Gastrocnemius medialis (tissue), 4 donors: ENCODE measurements at regions of chr21 and their contacts with region 1.

Region 1: DNA sequence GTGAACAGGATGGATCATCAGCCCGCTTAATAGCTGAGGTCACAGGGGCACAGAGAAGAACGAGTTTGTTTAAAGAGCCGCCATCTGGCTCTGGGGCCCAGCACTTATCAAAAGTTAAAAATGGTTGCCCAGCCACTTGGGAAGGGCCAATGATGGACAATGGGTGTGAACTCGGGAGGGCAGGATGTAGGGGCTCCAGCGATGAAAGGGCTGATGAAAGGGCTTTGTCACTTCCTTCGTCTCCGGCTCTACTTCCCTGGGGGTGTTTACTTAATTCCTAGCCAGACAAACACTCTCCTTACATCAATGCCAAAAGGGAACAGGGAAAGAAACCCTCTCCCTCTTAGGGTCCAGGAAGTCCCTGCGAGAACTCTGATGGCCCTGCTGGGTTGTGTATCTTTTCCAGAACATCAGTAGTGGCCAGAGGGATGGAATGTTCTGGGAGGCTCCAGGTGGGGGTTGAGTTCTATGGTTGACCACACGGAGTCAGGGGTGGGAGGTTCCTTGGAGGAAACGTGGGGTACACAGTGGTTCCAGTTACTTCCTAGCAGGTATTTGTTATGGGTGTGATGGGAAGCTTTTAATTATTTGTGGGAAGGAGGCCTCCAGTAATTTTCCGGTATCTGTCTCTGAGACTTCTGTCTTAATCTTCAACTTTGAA is 9.0 kb upstream of the ABCG1 start:
- DNase-seq: peak in 1 of 2 donors; percentile 5
- ATAC-seq: no peak
- H3K4me3 ChIP-seq: no peak overlapping the region
- H3K27ac ChIP-seq: no peak overlapping the region
- H3K4me1 ChIP-seq: no peaks in the 10 kb centered on the region
- H3K27me3 ChIP-seq: no peaks in the 10 kb centered on the region
- CTCF ChIP-seq: no peak
- POLR2A ChIP-seq: no peak

Region 2: DNA sequence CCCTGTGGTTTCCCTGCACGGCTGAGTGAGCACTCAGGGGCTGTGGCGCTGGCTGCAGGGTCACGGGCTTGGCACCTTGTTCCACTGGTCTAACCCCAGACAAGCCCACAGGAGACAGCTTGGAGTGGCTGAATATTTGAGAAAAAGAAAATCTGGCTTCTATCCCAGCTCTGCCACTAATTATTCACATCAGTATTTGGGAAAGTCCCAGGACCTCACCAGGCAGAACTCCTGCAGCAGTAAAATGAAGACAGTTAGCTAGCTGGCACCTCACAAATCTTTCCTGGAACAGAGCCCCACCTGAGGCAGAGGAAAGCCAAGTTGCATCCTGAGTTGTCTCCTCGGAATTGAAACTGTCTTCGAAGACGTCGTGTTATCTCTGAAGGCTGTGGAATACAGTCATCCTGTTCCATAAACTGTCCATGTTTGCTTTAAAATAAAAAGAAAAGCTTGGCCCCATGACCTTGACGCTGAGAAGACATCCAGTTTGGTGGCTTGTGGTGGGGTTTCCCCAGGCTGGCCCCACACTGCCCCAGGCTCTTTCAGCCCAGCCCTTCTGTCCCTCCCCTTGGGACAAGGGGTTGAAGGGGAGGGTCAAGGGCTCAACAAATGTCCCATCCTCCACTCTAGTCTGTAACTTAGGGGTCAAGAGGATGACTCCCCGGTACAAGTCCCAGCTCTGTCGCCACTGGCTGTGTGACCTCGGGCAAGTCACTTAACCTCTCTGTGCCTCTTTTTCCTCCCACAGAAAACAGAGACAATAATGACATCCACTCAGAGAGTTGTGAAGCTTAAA is 608.2 kb before region 1 on chr21:
- in situ Hi-C with region 1: no loop called
- intact Hi-C with region 1: no loop called
- DNase-seq: no peak
- ATAC-seq: no peak
- H3K4me3 ChIP-seq: no peak overlapping the region
- H3K27ac ChIP-seq: no peak overlapping the region
- H3K4me1 ChIP-seq: no peaks in the 10 kb centered on the region
- H3K27me3 ChIP-seq: peaks cover 0 to 8% (median 0%) of the 10 kb centered on the region in 3 donors
- CTCF ChIP-seq: no peak
- POLR2A ChIP-seq: no peak

Region 3: GRCh38 chr21:42156690-42157577 is 53.0 kb before region 1 on chr21:
- in situ Hi-C with region 1: no loop called
- intact Hi-C with region 1: no loop called
- DNase-seq: no peak
- ATAC-seq: peak in 1 of 2 donors; percentile 18
- H3K4me3 ChIP-seq: no peak overlapping the region
- H3K27ac ChIP-seq: no peak overlapping the region
- H3K4me1 ChIP-seq: peaks cover 0 to 5% of the 10 kb centered on the region in 2 donors
- H3K27me3 ChIP-seq: no peaks in the 10 kb centered on the region
- CTCF ChIP-seq: no peak
- POLR2A ChIP-seq: no peak

Region 4: DNA sequence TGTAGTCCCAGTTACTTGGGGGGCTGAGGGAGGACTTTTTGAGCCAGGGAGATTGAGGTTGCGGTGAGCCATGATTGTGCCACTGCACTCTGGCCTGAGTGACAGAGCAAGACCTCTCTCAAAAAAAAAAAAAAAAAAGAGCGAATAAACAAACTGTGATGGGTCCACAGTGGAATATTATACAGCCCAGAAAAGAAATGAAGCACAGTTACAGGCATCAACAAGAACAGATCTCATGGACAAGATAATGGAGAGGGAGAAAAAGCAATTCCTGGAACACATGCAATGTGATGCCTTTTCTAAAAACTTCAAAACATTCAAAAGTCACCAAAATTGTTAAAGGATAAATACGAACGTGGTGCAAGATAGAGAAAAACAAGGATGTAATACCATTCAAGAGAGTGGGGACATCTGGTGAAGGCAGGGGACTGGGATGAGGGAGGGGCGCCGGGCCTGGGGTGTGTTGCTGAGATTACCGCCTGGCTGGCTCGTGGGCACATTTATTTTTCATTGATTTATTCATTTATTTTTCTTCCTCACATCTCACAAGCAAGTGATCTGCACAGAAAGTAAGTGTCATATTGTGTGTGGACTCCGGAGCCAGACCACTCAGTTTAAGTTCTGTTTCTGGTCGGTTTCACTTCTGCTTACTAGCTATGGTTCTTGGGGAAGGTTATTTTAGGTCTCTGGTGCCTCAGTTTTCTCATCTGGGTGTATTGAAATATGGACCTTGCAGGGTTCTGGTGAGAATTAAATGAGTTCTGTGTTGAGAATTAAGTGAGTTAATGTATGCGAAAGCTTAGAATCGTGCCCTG is 39.0 kb after region 1 on chr21:
- in situ Hi-C with region 1: loop called in 1 of 4 experiments (anchors 10 kb)
- intact Hi-C with region 1: loop called (anchors 5 kb)
- DNase-seq: no peak
- ATAC-seq: no peak
- H3K4me3 ChIP-seq: no peak overlapping the region
- H3K27ac ChIP-seq: no peak overlapping the region
- H3K4me1 ChIP-seq: peaks cover 0 to 12% of the 10 kb centered on the region in 2 donors
- H3K27me3 ChIP-seq: no peaks in the 10 kb centered on the region
- CTCF ChIP-seq: no peak
- POLR2A ChIP-seq: no peak